ENCODE measurements at regions of chr3 and their contacts with region 1.

Region 1: GRCh38 chr3:182909318-182910040 is 70.9 kb downstream of the DCUN1D1 start:
- DNase-seq: peak; percentile 41
- H3K4me3 ChIP-seq: no peak overlapping the region
- H3K27ac ChIP-seq: no peak overlapping the region
- H3K4me1 ChIP-seq: peaks cover 53% of the 10 kb centered on the region
- CTCF ChIP-seq: peak; percentile 92

Region 2: GRCh38 chr3:182979674-182980191 is 70.3 kb after region 1 on chr3:
- CTCF ChIA-PET with region 1: no interaction called
- POLR2A ChIA-PET with region 1: interaction called, 3 read pairs
- intact Hi-C with region 1: loop called (anchors 2 kb)
- DNase-seq: peak; percentile 52
- H3K4me3 ChIP-seq: peak overlapping the region; percentile 91
- H3K27ac ChIP-seq: peak overlapping the region; percentile 50
- H3K4me1 ChIP-seq: peaks cover 37% of the 10 kb centered on the region
- CTCF ChIP-seq: no peak

Region 3: DNA sequence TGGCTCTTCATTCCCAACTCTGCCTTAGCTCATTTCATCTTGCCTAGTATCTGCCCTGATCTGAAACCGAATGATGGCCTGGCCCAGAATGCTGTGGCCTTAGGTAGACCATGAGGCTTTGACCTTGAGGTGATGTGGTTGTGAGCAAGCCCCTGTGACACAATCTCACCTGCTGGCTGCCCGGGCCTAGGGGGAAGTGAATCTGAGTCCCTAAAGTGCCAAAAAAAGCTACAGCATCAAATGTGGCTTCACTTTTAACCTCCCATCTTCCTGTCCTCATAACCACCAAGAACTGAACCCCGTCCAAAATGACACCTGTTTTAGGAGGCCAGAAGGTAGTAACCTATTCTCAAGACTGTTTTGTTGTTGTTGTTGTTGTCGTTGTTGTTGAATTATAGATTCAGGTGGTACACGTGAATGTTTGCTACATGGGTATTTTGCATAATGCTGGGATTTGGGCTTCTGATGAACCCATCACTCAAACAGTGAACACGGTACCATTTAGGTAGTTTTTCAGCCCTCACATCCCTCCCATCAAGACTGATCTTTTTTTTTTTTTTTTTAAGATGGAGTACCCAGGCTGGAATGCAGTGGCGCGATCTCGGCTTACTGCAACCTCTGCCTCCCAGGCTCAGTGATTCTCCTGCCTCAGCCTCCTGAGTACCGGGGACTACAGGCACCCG is 135.2 kb after region 1 on chr3:
- CTCF ChIA-PET with region 1: interaction called, 3 read pairs
- POLR2A ChIA-PET with region 1: interaction called, 3 read pairs
- intact Hi-C with region 1: loop called (anchors 1 kb)
- DNase-seq: peak; percentile 93
- H3K4me3 ChIP-seq: peak overlapping the region; percentile 51
- H3K27ac ChIP-seq: peak overlapping the region; percentile 95
- H3K4me1 ChIP-seq: peaks cover 64% of the 10 kb centered on the region
- CTCF ChIP-seq: no peak

Region 4: DNA sequence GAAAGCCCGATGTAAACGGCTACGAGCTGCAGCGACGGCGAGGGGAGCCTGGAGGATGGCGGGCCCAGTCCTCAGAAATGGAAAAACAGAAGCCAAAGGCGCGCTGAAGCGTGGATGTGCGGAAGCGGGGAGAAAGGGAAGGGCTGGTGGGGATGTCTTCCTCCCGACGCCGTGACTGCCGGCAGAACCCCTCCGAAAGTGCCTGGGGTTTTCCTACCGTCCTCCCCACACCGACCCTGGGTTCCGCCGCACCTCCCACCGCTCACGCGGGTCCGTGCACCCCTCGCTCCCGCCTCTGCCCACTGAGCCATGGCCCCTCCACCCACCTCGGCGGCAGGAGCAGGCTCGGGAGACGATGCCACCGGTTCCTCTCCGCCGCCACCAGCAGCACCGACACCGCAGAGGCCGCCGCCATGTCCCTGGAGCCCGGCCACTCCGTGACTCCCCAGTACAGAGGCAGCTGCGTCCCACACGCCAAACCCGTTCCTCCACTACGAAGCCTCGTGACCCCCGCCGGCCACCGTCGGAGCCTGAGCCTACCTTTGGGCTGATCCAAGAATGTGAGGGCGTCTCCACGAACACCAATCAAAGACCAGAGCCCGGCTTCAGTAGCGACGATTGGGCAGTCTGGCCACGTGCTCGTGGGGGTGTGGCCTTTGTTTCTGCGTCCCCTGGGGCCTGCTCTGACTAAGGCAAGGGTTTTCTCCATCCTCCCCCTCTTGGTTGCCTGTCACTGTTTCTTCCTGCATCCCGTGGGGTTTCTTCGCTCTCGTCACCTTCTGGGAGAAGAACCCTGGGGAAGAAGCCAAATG is 189.8 kb after region 1 on chr3 and contains the start of gene MCCC1:
- CTCF ChIA-PET with region 1: no interaction called
- POLR2A ChIA-PET with region 1: interaction called, 4 read pairs
- intact Hi-C with region 1: loop called (anchors 5 kb)
- DNase-seq: peak; percentile 99
- H3K4me3 ChIP-seq: peak within 1 kb of the TSS; percentile 82
- H3K27ac ChIP-seq: peak within 1 kb of the TSS; percentile 75
- H3K4me1 ChIP-seq: peaks cover 20% of the 10 kb centered on the region
- CTCF ChIP-seq: no peak
- total RNA-seq, gene MCCC1: 29.9 and 39.9 TPM in 2 replicates

Region 5: GRCh38 chr3:183116025-183116614 is 206.6 kb after region 1 on chr3:
- CTCF ChIA-PET with region 1: no interaction called
- POLR2A ChIA-PET with region 1: interaction called, 5 read pairs
- intact Hi-C with region 1: loop called (anchors 5 kb)
- DNase-seq: peak; percentile 99
- H3K4me3 ChIP-seq: peak overlapping the region; percentile 56
- H3K27ac ChIP-seq: peak overlapping the region; percentile 67
- H3K4me1 ChIP-seq: peaks cover 32% of the 10 kb centered on the region
- CTCF ChIP-seq: no peak

Region 6: GRCh38 chr3:183161552-183162336 is 252.3 kb after region 1 on chr3:
- CTCF ChIA-PET with region 1: no interaction called
- POLR2A ChIA-PET with region 1: no interaction called
- intact Hi-C with region 1: loop called (anchors 5 kb)
- DNase-seq: peak; percentile 89
- H3K4me3 ChIP-seq: peak overlapping the region; percentile 58
- H3K27ac ChIP-seq: no peak overlapping the region
- H3K4me1 ChIP-seq: peaks cover 28% of the 10 kb centered on the region
- CTCF ChIP-seq: peak; percentile 37; the same call in 1 of the 2 replicates

Region 7: DNA sequence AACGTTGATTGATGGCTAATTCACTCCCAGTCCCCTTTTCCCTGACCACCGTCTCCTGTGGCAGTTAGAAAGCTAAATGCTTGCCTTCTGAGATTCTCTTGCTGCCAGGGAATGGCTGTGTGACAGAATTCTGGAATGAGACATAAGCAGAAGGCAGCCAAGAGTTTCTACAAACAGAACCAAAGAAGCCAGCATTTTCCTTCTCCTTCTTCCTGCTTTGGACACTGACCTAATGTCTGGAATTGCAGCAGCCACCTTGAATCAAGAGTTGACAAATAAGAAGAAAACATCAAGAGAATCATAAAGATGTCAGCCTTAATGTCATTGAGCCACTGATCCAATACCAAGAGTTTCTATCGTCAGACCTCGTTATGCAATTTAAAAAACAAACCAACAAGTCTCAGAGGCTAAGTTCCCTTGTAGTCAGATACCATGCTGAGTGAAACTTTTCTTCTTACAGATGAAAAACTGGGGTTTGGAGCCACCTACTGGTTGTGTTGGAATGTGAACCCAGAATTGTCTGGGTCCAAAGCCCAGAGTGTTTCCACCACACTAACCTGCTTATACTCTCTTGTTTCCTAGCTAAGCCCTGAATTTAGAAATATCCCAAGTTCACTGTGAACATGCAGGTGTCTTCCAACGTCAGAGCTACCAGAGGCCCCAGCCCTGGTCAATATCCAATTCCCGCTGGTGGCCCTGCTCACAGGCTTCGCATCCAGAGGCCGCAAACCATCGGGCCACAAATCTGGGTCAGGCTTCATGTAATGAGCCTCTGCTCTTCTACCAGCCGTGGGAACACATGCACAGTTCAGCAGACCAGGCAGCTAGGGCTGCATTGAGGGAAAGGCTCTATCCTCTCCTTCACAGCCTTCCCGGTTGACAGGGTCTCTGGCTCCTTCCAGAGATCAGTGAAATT is 476.5 kb after region 1 on chr3:
- CTCF ChIA-PET with region 1: no interaction called
- POLR2A ChIA-PET with region 1: no interaction called
- intact Hi-C with region 1: loop called (anchors 5 kb)
- DNase-seq: peak; percentile 79
- H3K4me3 ChIP-seq: no peak overlapping the region
- H3K27ac ChIP-seq: no peak overlapping the region
- H3K4me1 ChIP-seq: peaks cover 14% of the 10 kb centered on the region
- CTCF ChIP-seq: peak; percentile 93

Region 8: GRCh38 chr3:183468424-183468823 is 558.9 kb after region 1 on chr3:
- CTCF ChIA-PET with region 1: no interaction called
- POLR2A ChIA-PET with region 1: no interaction called
- intact Hi-C with region 1: no loop called
- DNase-seq: no peak
- H3K4me3 ChIP-seq: no peak overlapping the region
- H3K27ac ChIP-seq: no peak overlapping the region
- H3K4me1 ChIP-seq: peaks cover 28% of the 10 kb centered on the region
- CTCF ChIP-seq: no peak

Measured in OCI-LY7 (cell line).